ENCODE measurements at regions of chr1 and their contacts with region 1.

Region 1: DNA sequence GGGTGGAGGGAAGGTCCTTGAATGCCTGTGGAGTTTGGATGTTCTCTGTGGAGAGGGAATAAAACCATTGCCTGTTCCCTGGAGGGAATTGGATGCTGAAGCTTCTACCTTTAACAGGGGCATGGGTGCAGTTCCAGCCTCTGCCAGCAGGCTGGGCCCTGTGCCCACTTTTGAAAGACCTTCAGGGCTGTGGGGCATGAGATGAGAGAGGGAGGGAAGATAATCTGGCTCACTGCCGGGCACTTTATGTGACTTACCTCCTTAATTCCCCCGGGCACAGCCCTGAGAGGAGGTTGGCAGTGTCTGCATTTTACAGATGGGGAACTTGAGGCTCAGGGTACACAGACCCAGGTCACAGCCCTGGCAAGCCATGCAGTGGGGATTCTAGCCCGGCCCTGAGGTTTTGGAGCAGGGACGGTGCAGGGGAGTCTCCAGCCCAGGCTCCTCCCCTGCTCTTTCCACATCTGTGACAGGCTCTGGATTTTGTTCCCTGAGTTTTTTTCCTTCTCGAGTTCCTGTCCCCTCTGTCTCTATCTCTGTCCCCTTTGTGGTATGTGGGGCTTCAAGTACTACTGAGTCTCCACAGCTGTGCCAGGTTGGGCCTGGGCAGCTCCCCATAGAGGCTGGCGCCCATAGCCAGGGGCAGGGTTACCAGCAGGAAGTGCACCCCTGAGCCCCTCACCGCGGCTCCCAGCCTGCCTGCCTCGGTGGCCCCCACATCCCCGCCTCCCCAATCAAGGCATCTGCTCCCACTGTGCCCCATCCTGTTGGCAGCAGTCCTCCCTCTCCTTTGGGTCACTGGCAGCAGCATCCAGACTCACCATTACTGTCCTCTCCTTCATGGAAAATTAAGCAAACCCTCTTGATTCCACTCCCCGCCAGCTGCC is 14.0 kb upstream of the THEMIS2 start:
- DNase-seq: peak; percentile 88
- ATAC-seq: peak; percentile 95
- H3K4me3 ChIP-seq: no peak overlapping the region
- H3K4me3 Mint-ChIP-seq: no peak overlapping the region
- H3K27ac ChIP-seq: no peak overlapping the region
- H3K27ac Mint-ChIP-seq: peak overlapping the region; percentile 79
- H3K4me1 ChIP-seq: peaks cover 20 to 22% of the 10 kb centered on the region in 2 donors
- H3K4me1 Mint-ChIP-seq: peaks cover 27% of the 10 kb centered on the region
- H3K27me3 ChIP-seq: peaks cover 0 to 3% (median 0%) of the 10 kb centered on the region in 4 experiments
- H3K27me3 Mint-ChIP-seq: no peaks in the 10 kb centered on the region
- CTCF ChIP-seq: peak; percentile 97

Region 2: DNA sequence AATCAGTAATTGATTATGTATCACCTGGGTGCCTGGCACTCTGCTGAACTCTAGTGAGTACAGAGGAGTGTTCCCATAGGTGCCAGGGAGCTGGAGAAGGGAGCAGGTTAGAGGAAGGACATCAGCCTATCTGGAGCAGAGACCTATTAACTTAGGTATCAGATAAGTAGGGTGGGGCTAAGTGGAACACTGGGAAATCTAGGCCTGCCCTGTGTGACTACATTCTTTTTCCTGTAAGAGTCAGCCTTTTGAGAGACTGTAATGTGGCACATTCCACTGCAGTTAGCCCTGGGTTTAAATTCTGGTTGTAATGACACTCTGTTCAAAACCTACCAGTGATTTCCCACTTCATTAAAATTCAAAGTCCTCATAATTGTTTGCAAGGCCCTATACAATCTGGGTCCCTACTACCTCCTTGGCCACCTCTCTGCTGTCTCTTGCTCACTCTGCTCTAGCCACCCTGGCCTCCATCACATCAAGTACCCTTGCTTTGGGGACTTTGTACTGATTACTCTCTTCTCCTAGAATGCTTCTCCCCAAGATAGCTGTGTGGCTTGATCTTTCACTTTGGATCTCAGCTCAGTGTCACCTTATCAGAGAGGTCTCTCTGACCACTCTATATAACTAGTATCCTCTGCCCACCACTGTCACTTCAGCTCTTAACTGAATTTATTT is 72.4 kb before region 1 on chr1:
- CTCF ChIA-PET with region 1: no interaction called
- POLR2A ChIA-PET with region 1: no interaction called
- intact Hi-C with region 1: no loop called
- DNase-seq: no peak
- ATAC-seq: no peak
- H3K4me3 ChIP-seq: no peak overlapping the region
- H3K4me3 Mint-ChIP-seq: no peak overlapping the region
- H3K27ac ChIP-seq: no peak overlapping the region
- H3K27ac Mint-ChIP-seq: no peak overlapping the region
- H3K4me1 ChIP-seq: no peaks in the 10 kb centered on the region
- H3K4me1 Mint-ChIP-seq: peaks cover 17% of the 10 kb centered on the region
- H3K27me3 ChIP-seq: no peaks in the 10 kb centered on the region
- H3K27me3 Mint-ChIP-seq: no peaks in the 10 kb centered on the region
- CTCF ChIP-seq: no peak

Region 3: GRCh38 chr1:27872059-27872801 is 13.9 kb after region 1 on chr1 and contains the start of gene THEMIS2:
- CTCF ChIA-PET with region 1: interaction called, 6 read pairs
- POLR2A ChIA-PET with region 1: interaction called, 6 read pairs
- intact Hi-C with region 1: loop called (anchors 1 kb)
- DNase-seq: peak; percentile 78
- ATAC-seq: peak; percentile 73
- H3K4me3 ChIP-seq: peak within 1 kb of the TSS; percentile 77 to 96 (median 81)
- H3K4me3 Mint-ChIP-seq: peak within 1 kb of the TSS; percentile 92
- H3K27ac ChIP-seq: peak within 1 kb of the TSS; percentile 48 to 72
- H3K27ac Mint-ChIP-seq: peak within 1 kb of the TSS; percentile 81
- H3K4me1 ChIP-seq: peaks cover 48 to 72% of the 10 kb centered on the region in 2 donors
- H3K4me1 Mint-ChIP-seq: peaks cover 43% of the 10 kb centered on the region
- H3K27me3 ChIP-seq: no peaks in the 10 kb centered on the region
- H3K27me3 Mint-ChIP-seq: no peaks in the 10 kb centered on the region
- CTCF ChIP-seq: no peak
- total RNA-seq, gene THEMIS2: 221 and 230 TPM in 2 replicates

Region 4: GRCh38 chr1:27891196-27891889 is 33.0 kb after region 1 on chr1:
- CTCF ChIA-PET with region 1: interaction called, 19 read pairs
- POLR2A ChIA-PET with region 1: interaction called, 4 read pairs
- intact Hi-C with region 1: loop called (anchors 1 kb)
- DNase-seq: peak; percentile 88
- ATAC-seq: peak; percentile 81
- H3K4me3 ChIP-seq: peak overlapping the region in 2 of 5 experiments; percentile 7 to 12
- H3K4me3 Mint-ChIP-seq: peak overlapping the region; percentile 82
- H3K27ac ChIP-seq: peak overlapping the region; percentile 92 to 94
- H3K27ac Mint-ChIP-seq: peak overlapping the region; percentile 96
- H3K4me1 ChIP-seq: peaks cover 40 to 64% of the 10 kb centered on the region in 2 donors
- H3K4me1 Mint-ChIP-seq: peaks cover 57% of the 10 kb centered on the region
- H3K27me3 ChIP-seq: no peaks in the 10 kb centered on the region
- H3K27me3 Mint-ChIP-seq: no peaks in the 10 kb centered on the region
- CTCF ChIP-seq: peak; percentile 68

Region 5: DNA sequence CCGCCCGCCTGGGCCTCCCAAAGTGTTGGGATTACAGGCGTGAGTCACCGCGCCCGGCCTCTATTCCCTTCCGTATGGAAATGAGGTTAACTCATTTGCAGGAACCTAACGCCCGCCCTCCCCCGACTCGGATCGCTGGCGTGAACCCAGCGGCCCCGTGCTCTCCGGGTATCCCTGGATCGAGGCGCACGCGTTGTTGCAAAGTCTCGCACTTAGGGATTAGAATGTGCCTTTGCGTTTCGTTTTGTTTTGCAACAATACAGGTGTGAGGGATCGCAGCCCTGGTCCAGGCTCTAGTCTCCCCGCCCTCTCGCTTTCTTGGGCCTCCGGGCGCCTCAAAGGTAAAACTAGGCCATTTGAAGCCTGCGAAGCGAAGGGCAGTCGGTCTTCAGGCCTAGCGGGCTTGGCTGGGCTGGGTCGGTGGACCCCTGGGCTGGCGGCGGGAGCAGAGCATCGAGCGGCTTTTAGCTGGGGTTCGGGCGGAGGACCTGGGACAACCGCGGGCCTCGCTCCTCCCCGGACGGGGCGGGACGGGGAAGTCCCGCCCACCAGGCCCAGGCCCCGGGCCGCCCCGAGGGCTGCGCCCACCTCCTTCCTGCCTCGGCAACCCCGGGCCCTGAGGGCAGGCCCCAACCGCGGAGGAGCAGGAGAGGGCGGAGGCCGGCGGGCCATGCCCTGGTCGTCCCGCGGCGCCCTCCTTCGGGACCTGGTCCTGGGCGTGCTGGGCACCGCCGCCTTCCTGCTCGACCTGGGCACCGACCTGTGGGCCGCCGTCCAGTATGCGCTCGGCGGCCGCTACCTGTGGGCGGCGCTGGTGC is 101.3 kb after region 1 on chr1 and contains the start of gene XKR8:
- CTCF ChIA-PET with region 1: interaction called, 6 read pairs
- POLR2A ChIA-PET with region 1: no interaction called
- intact Hi-C with region 1: loop called (anchors 5 kb)
- DNase-seq: peak; percentile 88
- ATAC-seq: peak; percentile 98
- H3K4me3 ChIP-seq: peak within 1 kb of the TSS; percentile 63 to 92 (median 85)
- H3K4me3 Mint-ChIP-seq: peak within 1 kb of the TSS; percentile 93
- H3K27ac ChIP-seq: peak within 1 kb of the TSS; percentile 51 to 82
- H3K27ac Mint-ChIP-seq: peak within 1 kb of the TSS; percentile 89
- H3K4me1 ChIP-seq: peaks cover 14 to 17% of the 10 kb centered on the region in 2 donors
- H3K4me1 Mint-ChIP-seq: peaks cover 16% of the 10 kb centered on the region
- H3K27me3 ChIP-seq: peaks cover 0 to 3% (median 0%) of the 10 kb centered on the region in 4 experiments
- H3K27me3 Mint-ChIP-seq: no peaks in the 10 kb centered on the region
- CTCF ChIP-seq: peak; percentile 48
- total RNA-seq, gene XKR8: 8.7 and 10.1 TPM in 2 replicates

Region 6: DNA sequence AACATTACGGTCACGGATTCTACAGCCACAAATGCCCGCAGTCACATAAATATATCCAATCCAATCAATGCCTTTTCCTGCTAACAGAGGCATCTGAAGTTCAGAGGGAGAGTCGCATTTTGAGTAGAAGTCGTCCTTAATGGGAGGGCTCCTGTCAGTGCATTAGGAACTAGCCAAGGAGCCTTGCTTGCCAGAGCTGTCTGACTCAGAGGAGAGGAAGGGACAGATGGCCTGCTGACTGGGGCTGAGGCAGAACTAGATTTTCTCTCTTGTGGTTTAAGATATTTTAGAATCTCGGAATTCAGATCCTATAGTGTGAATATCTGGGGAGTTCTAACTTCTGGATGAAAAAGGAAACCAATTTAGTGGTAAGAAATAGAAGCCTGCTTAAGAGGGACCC is 112.1 kb after region 1 on chr1:
- CTCF ChIA-PET with region 1: interaction called, 17 read pairs
- POLR2A ChIA-PET with region 1: no interaction called
- intact Hi-C with region 1: no loop called
- DNase-seq: no peak
- ATAC-seq: no peak
- H3K4me3 ChIP-seq: no peak overlapping the region
- H3K4me3 Mint-ChIP-seq: no peak overlapping the region
- H3K27ac ChIP-seq: no peak overlapping the region
- H3K27ac Mint-ChIP-seq: peak overlapping the region; percentile 37
- H3K4me1 ChIP-seq: no peaks in the 10 kb centered on the region
- H3K4me1 Mint-ChIP-seq: peaks cover 9% of the 10 kb centered on the region
- H3K27me3 ChIP-seq: no peaks in the 10 kb centered on the region
- H3K27me3 Mint-ChIP-seq: no peaks in the 10 kb centered on the region
- CTCF ChIP-seq: no peak

Region 7: DNA sequence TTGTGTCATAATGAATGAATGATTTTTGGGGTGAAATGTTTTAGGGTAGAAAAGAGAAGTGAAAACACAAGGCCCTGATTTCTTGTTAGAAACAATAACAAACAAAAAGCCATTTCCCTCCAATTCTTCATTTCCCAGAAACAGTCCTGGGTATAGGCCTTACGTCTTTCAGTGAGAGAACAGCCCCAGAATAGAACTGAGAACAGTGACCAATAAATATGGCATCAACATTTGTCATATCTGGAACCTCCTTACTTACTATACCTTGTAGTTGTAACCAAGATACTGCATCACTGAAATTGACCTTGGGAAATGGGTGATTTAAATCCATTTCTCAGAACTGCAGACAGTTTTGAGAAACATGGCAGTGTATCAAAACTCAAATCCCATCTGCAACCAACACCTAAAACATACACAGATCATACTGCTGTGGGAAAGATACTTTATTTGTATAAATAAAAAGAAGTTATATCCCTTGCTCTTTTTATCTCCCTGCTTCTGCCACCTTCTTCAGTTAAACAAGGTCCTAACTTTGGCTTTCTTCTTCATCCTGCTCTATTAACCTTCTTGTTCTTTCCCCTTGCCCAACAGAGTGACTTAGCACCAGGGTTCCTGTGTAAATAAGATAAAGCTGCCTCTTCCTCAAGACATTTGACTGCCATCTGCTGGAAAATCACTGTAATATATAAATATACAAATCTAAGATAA is 121.0 kb after region 1 on chr1:
- CTCF ChIA-PET with region 1: interaction called, 147 read pairs
- POLR2A ChIA-PET with region 1: interaction called, 3 read pairs
- intact Hi-C with region 1: loop called (anchors 1 kb)
- DNase-seq: peak; percentile 72
- ATAC-seq: peak; percentile 51
- H3K4me3 ChIP-seq: no peak overlapping the region
- H3K4me3 Mint-ChIP-seq: no peak overlapping the region
- H3K27ac ChIP-seq: no peak overlapping the region
- H3K27ac Mint-ChIP-seq: peak overlapping the region; percentile 2
- H3K4me1 ChIP-seq: peaks cover 0 to 7% of the 10 kb centered on the region in 2 donors
- H3K4me1 Mint-ChIP-seq: peaks cover 4% of the 10 kb centered on the region
- H3K27me3 ChIP-seq: no peaks in the 10 kb centered on the region
- H3K27me3 Mint-ChIP-seq: no peaks in the 10 kb centered on the region
- CTCF ChIP-seq: peak; percentile 81

Region 8: DNA sequence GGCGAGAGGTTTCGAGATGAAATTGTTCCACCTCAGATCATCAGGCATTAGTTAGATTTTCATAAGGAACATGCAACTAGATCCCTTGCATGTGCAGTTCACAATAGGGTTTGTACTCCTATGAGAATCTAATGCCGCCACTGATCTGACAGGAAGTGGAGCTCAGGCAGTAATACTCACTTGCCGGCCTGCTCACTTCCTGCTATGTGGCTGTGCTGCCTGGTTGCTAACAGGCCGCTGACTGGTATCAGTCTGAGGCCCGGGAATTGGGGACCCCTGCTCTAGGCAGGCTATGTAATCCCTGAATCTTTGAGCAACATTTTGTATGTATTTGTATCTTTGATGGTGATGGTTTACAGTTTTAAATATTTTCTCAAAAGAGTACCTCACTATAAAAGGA is 134.0 kb after region 1 on chr1:
- CTCF ChIA-PET with region 1: interaction called, 10 read pairs
- POLR2A ChIA-PET with region 1: no interaction called
- intact Hi-C with region 1: no loop called
- DNase-seq: peak; percentile 26
- ATAC-seq: no peak
- H3K4me3 ChIP-seq: no peak overlapping the region
- H3K4me3 Mint-ChIP-seq: no peak overlapping the region
- H3K27ac ChIP-seq: peak overlapping the region in 1 of 2 donors; percentile 54
- H3K27ac Mint-ChIP-seq: peak overlapping the region; percentile 74
- H3K4me1 ChIP-seq: peaks cover 4 to 7% of the 10 kb centered on the region in 2 donors
- H3K4me1 Mint-ChIP-seq: peaks cover 6% of the 10 kb centered on the region
- H3K27me3 ChIP-seq: no peaks in the 10 kb centered on the region
- H3K27me3 Mint-ChIP-seq: no peaks in the 10 kb centered on the region
- CTCF ChIP-seq: no peak